HCT116 (cell line): ENCODE measurements at regions of chr18 and their contacts with region 1.

Region 1: GRCh38 chr18:46281185-46282176 is 177.3 kb downstream of the HAUS1 start:
- DNase-seq: peak; percentile 43
- ATAC-seq: peak; percentile 95
- H3K4me3 ChIP-seq: no peak overlapping the region
- H3K27ac ChIP-seq: no peak overlapping the region
- H3K4me1 ChIP-seq: no peaks in the 10 kb centered on the region
- H3K27me3 ChIP-seq: no peaks in the 10 kb centered on the region
- CTCF ChIP-seq: peak; percentile 74 to 96 (median 83)
- POLR2A ChIP-seq: no peak
- RAD21 ChIP-seq: peak; percentile 87

Region 2: GRCh38 chr18:45993389-45993788 is 288.1 kb before region 1 on chr18:
- CTCF ChIA-PET with region 1: no interaction called
- POLR2A ChIA-PET with region 1: no interaction called
- RAD21 ChIA-PET with region 1: no interaction called
- intact Hi-C with region 1: no loop called
- DNase-seq: no peak
- ATAC-seq: no peak
- H3K4me3 ChIP-seq: no peak overlapping the region
- H3K27ac ChIP-seq: no peak overlapping the region
- H3K4me1 ChIP-seq: no peaks in the 10 kb centered on the region
- H3K27me3 ChIP-seq: no peaks in the 10 kb centered on the region
- CTCF ChIP-seq: no peak
- POLR2A ChIP-seq: no peak
- RAD21 ChIP-seq: no peak

Region 3: DNA sequence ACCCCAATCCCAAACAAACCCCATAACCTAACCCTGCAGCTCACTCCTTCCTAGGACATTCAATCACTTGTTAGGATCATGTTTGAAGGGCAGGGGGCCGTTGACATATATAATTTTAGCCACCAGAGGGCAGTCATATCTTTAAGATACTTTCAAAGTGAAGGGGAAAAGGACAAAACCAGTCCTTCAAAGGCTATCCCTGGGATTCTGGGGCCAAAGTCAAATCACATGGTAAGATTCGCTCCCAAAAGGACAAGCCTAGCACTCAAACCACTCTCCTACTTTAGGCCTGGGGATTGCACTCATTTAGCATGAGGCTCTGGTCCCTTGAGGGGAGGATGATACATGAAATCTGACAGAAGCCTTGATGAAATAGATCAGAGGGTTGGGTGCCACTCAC is 132.7 kb before region 1 on chr18:
- CTCF ChIA-PET with region 1: interaction called, 4 read pairs
- POLR2A ChIA-PET with region 1: no interaction called
- RAD21 ChIA-PET with region 1: no interaction called
- intact Hi-C with region 1: loop called (anchors 1 kb)
- DNase-seq: no peak
- ATAC-seq: peak; percentile 65
- H3K4me3 ChIP-seq: no peak overlapping the region
- H3K27ac ChIP-seq: no peak overlapping the region
- H3K4me1 ChIP-seq: peaks cover 20 to 28% of the 10 kb centered on the region in 2 experiments
- H3K27me3 ChIP-seq: no peaks in the 10 kb centered on the region
- CTCF ChIP-seq: peak; percentile 57 to 85 (median 78)
- POLR2A ChIP-seq: no peak
- RAD21 ChIP-seq: peak; percentile 85

Region 4: DNA sequence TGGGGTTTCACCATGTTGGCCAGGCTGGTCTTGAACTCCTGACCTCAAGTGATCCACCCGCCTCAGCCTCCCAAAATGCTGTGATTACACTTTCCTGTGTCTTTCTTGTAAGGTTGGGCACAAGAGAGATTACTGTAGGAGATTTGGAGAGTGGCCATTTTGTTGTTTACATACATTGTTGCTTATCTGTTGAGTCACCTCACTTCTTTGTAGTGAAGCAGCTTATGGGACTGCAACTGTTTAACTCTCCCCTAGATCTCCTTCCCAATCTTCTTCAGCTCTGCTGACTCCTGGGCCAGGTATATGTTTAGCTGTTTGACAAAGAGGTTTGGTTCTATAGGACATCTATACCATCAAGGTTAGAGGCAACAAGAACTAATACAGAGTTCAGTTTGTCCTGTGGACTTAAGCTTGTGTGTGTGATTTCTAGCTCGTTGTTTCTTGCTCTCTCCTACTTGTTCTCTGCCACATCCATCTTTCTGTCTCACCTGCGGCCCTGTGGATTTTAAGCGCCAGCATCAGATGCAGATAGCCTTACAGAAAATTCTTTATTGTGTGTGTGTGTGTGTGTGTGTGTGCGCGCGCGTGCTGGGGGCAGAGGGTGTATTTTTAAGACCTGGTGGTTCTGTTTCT is 81.8 kb before region 1 on chr18:
- CTCF ChIA-PET with region 1: no interaction called
- POLR2A ChIA-PET with region 1: no interaction called
- RAD21 ChIA-PET with region 1: no interaction called
- intact Hi-C with region 1: no loop called
- DNase-seq: peak; percentile 16
- ATAC-seq: peak; percentile 68
- H3K4me3 ChIP-seq: no peak overlapping the region
- H3K27ac ChIP-seq: peak overlapping the region; percentile 12
- H3K4me1 ChIP-seq: peaks cover 28 to 55% of the 10 kb centered on the region in 2 experiments
- H3K27me3 ChIP-seq: no peaks in the 10 kb centered on the region
- CTCF ChIP-seq: no peak
- POLR2A ChIP-seq: no peak
- RAD21 ChIP-seq: no peak

Region 5: DNA sequence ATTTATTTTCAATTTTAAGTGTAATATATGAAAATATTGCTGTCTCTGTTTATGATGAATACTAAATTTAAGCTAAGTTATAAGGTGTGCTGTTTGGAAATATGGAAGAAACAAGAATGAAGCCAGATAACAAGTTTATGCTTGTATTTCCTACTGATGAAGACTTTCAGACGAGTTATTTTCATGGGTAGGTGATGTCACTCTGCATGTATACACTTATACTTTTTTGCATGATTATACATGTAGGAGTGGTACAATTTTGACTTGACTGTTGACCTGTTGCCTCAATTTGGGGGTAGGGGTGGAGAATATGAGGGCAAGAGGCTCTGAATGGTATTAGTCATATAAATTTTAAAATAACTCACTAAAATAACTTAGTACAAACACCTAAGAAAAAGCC is 43.6 kb before region 1 on chr18:
- CTCF ChIA-PET with region 1: no interaction called
- POLR2A ChIA-PET with region 1: no interaction called
- RAD21 ChIA-PET with region 1: no interaction called
- intact Hi-C with region 1: no loop called
- DNase-seq: no peak
- ATAC-seq: no peak
- H3K4me3 ChIP-seq: no peak overlapping the region
- H3K27ac ChIP-seq: no peak overlapping the region
- H3K4me1 ChIP-seq: no peaks in the 10 kb centered on the region
- H3K27me3 ChIP-seq: no peaks in the 10 kb centered on the region
- CTCF ChIP-seq: no peak
- POLR2A ChIP-seq: no peak
- RAD21 ChIP-seq: no peak

Region 6: GRCh38 chr18:46481048-46481846 is 199.8 kb after region 1 on chr18:
- CTCF ChIA-PET with region 1: interaction called, 19 read pairs
- POLR2A ChIA-PET with region 1: no interaction called
- RAD21 ChIA-PET with region 1: no interaction called
- intact Hi-C with region 1: loop called (anchors 1 kb)
- DNase-seq: peak; percentile 27
- ATAC-seq: peak; percentile 86
- H3K4me3 ChIP-seq: no peak overlapping the region
- H3K27ac ChIP-seq: no peak overlapping the region
- H3K4me1 ChIP-seq: no peaks in the 10 kb centered on the region
- H3K27me3 ChIP-seq: peaks cover 37% of the 10 kb centered on the region
- CTCF ChIP-seq: peak; percentile 51 to 80 (median 79)
- POLR2A ChIP-seq: no peak
- RAD21 ChIP-seq: peak; percentile 61

Region 7: DNA sequence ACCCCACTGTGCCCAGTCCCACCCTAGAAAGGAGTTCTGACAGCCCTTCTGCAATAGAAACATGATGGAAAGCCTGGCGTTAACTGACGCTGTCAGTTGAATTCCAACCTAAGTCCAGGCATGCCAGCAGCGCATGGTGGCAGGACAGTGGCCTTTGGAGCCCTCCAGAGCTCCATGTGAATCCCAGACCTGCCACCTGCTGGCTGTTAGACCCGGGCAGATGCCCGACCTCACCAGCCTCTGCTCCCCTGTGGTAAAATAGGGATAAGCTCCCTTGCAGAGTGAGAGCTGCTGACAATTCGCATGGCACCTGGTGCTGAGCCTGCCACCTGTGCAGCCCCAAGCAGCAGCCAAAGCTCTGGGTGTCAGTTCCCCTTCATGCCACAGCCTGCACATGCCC is 237.0 kb after region 1 on chr18:
- CTCF ChIA-PET with region 1: interaction called, 35 read pairs
- POLR2A ChIA-PET with region 1: no interaction called
- RAD21 ChIA-PET with region 1: no interaction called
- intact Hi-C with region 1: loop called (anchors 1 kb)
- DNase-seq: no peak
- ATAC-seq: peak; percentile 80
- H3K4me3 ChIP-seq: no peak overlapping the region
- H3K27ac ChIP-seq: no peak overlapping the region
- H3K4me1 ChIP-seq: no peaks in the 10 kb centered on the region
- H3K27me3 ChIP-seq: peaks cover 57% of the 10 kb centered on the region
- CTCF ChIP-seq: peak; percentile 31 to 42 (median 35); a peak in 5 of 6 replicates
- POLR2A ChIP-seq: no peak
- RAD21 ChIP-seq: peak; percentile 54

Region 8: GRCh38 chr18:46622999-46623398 is 341.5 kb after region 1 on chr18:
- CTCF ChIA-PET with region 1: interaction called, 30 read pairs
- POLR2A ChIA-PET with region 1: no interaction called
- RAD21 ChIA-PET with region 1: interaction called in 1 of 2 experiments, 8 read pairs
- intact Hi-C with region 1: loop called (anchors 1 kb)
- DNase-seq: no peak
- ATAC-seq: peak; percentile 69
- H3K4me3 ChIP-seq: no peak overlapping the region
- H3K27ac ChIP-seq: no peak overlapping the region
- H3K4me1 ChIP-seq: no peaks in the 10 kb centered on the region
- H3K27me3 ChIP-seq: peaks cover 55% of the 10 kb centered on the region
- CTCF ChIP-seq: peak in 2 of 3 experiments; percentile 31 to 32; a peak in 3 of 6 replicates
- POLR2A ChIP-seq: no peak
- RAD21 ChIP-seq: peak; percentile 58